ENCODE measurements at regions of chr2 and their contacts with region 1.

Region 1: DNA sequence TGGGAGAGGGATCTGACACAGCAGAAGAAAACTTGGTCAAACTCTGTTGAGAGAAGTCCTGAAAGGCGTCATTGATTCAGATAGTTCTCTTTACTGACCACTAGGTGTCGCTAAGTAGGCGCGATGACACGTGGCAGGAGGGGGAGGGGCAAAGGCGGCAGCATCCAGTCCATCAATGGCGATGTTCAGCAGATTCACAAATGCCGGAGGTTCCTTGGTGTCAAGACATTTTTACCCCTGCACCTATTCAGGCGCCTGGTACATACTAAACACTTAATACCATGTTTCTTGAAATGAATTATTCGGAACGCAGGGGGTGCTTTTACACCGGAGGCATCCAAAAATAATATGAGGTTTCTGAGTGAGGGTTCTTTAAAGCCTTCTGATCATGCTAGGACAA is 3.0 kb upstream of the PLEK start:
- DNase-seq: peak; percentile 85 to 90
- ATAC-seq: peak; percentile 79
- H3K4me3 ChIP-seq: no peak overlapping the region
- H3K27ac ChIP-seq: no peak overlapping the region
- H3K4me1 ChIP-seq: no peaks in the 10 kb centered on the region
- H3K27me3 ChIP-seq: no peaks in the 10 kb centered on the region

Region 2: GRCh38 chr2:68225119-68225632 is 136.9 kb before region 1 on chr2:
- intact Hi-C with region 1: no loop called
- DNase-seq: no peak
- ATAC-seq: peak; percentile 62
- H3K4me3 ChIP-seq: no peak overlapping the region
- H3K27ac ChIP-seq: peak overlapping the region in 1 of 2 donors; percentile 67
- H3K4me1 ChIP-seq: peaks cover 4 to 8% of the 10 kb centered on the region in 2 donors
- H3K27me3 ChIP-seq: no peaks in the 10 kb centered on the region

Region 3: GRCh38 chr2:68441179-68441993 is 79.3 kb after region 1 on chr2:
- intact Hi-C with region 1: loop called (anchors 2 to 5 kb)
- DNase-seq: peak; percentile 87
- ATAC-seq: peak; percentile 95
- H3K4me3 ChIP-seq: no peak overlapping the region
- H3K27ac ChIP-seq: peak overlapping the region in 1 of 2 donors; percentile 28
- H3K4me1 ChIP-seq: peaks cover 0 to 3% of the 10 kb centered on the region in 2 donors
- H3K27me3 ChIP-seq: no peaks in the 10 kb centered on the region

Measured in aorta (tissue), 5 donors.